ENCODE measurements at regions of chr5 and their contacts with region 1.

Region 1: GRCh38 chr5:157130925-157131324 is 11.7 kb downstream of the MED7 start:
- DNase-seq: peak in 1 of 2 experiments; percentile 59
- H3K4me3 ChIP-seq: no peak overlapping the region
- H3K4me3 Mint-ChIP-seq: no peak overlapping the region
- H3K27ac Mint-ChIP-seq: no peak overlapping the region
- H3K4me1 ChIP-seq: peaks cover 17% of the 10 kb centered on the region; the same call in 1 of the 2 replicates
- H3K4me1 Mint-ChIP-seq: peaks cover 14% of the 10 kb centered on the region
- H3K27me3 ChIP-seq: no peaks in the 10 kb centered on the region
- H3K27me3 Mint-ChIP-seq: no peaks in the 10 kb centered on the region
- CTCF ChIP-seq: no peak

Region 2: DNA sequence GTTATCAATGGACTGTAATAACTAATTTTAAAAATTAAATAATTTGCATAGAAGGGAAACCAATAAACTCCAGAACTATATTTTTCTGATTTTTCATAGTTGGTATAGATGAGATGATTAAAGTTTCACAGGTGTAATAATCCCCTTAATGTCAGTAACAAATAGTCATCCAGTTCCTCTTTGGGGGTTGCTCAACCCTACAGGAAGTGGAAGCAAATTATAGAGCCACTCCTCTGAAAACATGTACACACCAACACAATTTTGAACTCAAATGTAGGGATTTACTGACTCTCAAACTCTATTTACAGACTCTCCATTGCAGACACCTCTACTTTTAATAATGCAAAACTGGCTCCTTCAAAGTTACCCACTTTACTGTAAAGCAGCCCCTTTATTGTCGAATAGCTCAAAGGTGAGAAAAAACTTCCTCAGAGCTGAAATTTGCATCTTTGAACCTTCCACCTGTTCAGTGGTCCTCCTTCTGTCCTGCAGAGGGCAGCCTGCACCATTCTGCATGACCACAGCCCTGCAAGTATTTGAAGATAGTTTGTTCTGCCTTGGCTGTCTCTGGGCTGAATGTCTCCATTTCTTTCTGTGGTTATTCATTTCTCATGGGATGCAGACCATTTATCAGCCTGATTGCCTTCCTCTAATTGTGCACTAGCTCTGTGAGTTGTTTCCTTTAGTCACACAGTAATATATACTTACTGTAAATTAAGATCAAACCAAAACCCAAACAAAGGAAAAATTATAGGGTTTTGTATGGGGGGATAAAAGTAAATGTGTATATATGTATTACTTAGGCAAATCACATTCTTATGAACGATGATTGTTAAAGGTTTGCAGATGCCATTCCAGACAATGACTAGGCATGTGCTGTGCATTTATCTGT is 1187.2 kb before region 1 on chr5:
- CTCF ChIA-PET with region 1: no interaction called
- POLR2A ChIA-PET with region 1: no interaction called
- intact Hi-C with region 1: loop called (anchors 2 kb)
- DNase-seq: peak; percentile 73 to 77
- H3K4me3 ChIP-seq: no peak overlapping the region
- H3K4me3 Mint-ChIP-seq: peak overlapping the region; percentile 38
- H3K27ac Mint-ChIP-seq: peak overlapping the region; percentile 63
- H3K4me1 ChIP-seq: peaks cover 50% of the 10 kb centered on the region; the same call in 1 of the 2 replicates
- H3K4me1 Mint-ChIP-seq: peaks cover 31% of the 10 kb centered on the region
- H3K27me3 ChIP-seq: no peaks in the 10 kb centered on the region
- H3K27me3 Mint-ChIP-seq: no peaks in the 10 kb centered on the region
- CTCF ChIP-seq: peak; percentile 86 to 93

Region 3: DNA sequence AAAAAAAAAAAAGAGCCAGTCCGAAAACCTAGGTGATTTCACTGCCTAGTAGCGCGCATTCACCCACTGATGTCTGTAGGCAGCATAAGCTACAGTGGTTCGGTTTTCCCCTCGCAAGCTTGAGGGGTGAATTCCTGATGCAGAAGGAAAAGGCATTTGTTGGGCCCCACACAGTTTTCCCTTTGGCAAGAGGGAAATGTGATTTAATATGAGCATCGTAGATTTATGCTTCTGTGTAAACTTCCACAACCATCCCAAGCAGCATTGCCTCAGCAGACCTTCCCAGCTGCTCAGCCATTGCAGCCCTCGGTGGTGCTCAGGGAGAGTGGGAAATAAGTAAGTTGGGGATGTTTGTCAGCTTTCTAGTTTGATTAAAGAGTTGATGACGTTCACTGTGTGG is 512.3 kb before region 1 on chr5:
- CTCF ChIA-PET with region 1: no interaction called
- POLR2A ChIA-PET with region 1: no interaction called
- intact Hi-C with region 1: no loop called
- DNase-seq: no peak
- H3K4me3 ChIP-seq: no peak overlapping the region
- H3K4me3 Mint-ChIP-seq: no peak overlapping the region
- H3K27ac Mint-ChIP-seq: no peak overlapping the region
- H3K4me1 ChIP-seq: no peaks in the 10 kb centered on the region
- H3K4me1 Mint-ChIP-seq: no peaks in the 10 kb centered on the region
- H3K27me3 ChIP-seq: no peaks in the 10 kb centered on the region
- H3K27me3 Mint-ChIP-seq: peaks cover 3% of the 10 kb centered on the region
- CTCF ChIP-seq: no peak

Region 4: GRCh38 chr5:156824800-156825199 is 306.1 kb before region 1 on chr5:
- CTCF ChIA-PET with region 1: interaction called, 4 read pairs
- POLR2A ChIA-PET with region 1: no interaction called
- intact Hi-C with region 1: loop called (anchors 2 kb)
- DNase-seq: peak in 1 of 2 experiments; percentile 49
- H3K4me3 ChIP-seq: no peak overlapping the region
- H3K4me3 Mint-ChIP-seq: no peak overlapping the region
- H3K27ac Mint-ChIP-seq: no peak overlapping the region
- H3K4me1 ChIP-seq: 0 out of 2 replicates have a peak, but pooled peaks cover 9% of the 10 kb centered on the region
- H3K4me1 Mint-ChIP-seq: peaks cover 13% of the 10 kb centered on the region
- H3K27me3 ChIP-seq: no peaks in the 10 kb centered on the region
- H3K27me3 Mint-ChIP-seq: no peaks in the 10 kb centered on the region
- CTCF ChIP-seq: peak; percentile 44 to 55

Region 5: GRCh38 chr5:156892223-156892622 is 238.7 kb before region 1 on chr5:
- CTCF ChIA-PET with region 1: interaction called, 3 read pairs
- POLR2A ChIA-PET with region 1: no interaction called
- intact Hi-C with region 1: loop called (anchors 1 kb)
- DNase-seq: peak in 1 of 2 experiments; percentile 7
- H3K4me3 ChIP-seq: no peak overlapping the region
- H3K4me3 Mint-ChIP-seq: no peak overlapping the region
- H3K27ac Mint-ChIP-seq: no peak overlapping the region
- H3K4me1 ChIP-seq: no peaks in the 10 kb centered on the region
- H3K4me1 Mint-ChIP-seq: peaks cover 11% of the 10 kb centered on the region
- H3K27me3 ChIP-seq: no peaks in the 10 kb centered on the region
- H3K27me3 Mint-ChIP-seq: peaks cover 5% of the 10 kb centered on the region
- CTCF ChIP-seq: no peak

Region 6: DNA sequence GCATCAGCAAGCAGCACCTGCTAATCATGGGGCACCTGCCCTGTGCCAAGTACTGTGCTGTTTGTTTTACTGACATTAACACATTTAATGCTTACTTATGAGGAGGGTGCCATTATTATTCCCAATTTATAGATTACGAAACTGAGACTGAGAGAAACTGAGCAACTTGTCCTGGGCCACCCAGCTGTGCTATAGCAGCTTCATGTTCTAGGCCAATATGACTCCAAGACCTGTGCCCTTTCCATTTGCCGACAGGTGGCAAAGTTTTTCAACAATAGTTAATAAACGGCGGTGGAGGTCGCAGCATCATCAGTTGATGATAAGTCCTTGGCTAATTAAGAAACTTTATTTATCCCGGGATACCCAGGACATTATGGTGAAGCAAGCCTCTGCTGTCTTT is 223.3 kb before region 1 on chr5:
- CTCF ChIA-PET with region 1: no interaction called
- POLR2A ChIA-PET with region 1: no interaction called
- intact Hi-C with region 1: no loop called
- DNase-seq: no peak
- H3K4me3 ChIP-seq: no peak overlapping the region
- H3K4me3 Mint-ChIP-seq: no peak overlapping the region
- H3K27ac Mint-ChIP-seq: no peak overlapping the region
- H3K4me1 ChIP-seq: no peaks in the 10 kb centered on the region
- H3K4me1 Mint-ChIP-seq: no peaks in the 10 kb centered on the region
- H3K27me3 ChIP-seq: no peaks in the 10 kb centered on the region
- H3K27me3 Mint-ChIP-seq: no peaks in the 10 kb centered on the region
- CTCF ChIP-seq: no peak

Region 7: DNA sequence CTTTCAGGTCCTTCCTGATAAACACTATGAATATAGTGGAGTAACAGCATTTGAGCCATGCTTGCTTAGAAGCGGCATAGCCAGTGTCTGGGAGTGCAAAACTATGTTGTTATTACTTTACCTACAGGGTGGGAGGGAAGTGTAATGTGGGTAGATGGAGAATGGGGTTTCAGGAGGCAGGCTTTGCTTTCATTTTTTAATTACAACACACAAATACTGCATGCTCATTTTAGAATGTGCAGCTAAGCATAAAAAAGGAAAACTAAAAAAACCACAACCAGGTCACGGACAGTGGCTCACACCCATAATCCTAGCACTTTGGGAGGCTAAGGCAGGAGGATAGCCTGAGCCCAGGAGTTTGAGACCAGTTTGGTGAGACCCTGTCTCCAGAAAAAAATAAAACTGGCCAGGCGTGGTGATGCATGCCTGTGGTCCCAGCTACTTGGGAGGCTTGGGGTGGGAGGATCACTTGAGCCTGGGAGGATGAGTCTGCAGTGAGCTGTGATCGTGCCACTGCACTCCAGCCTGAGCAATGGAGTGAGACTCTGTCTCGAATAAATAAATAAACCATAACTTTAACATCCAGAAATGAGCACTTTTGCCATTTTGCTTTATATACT is 92.2 kb before region 1 on chr5:
- CTCF ChIA-PET with region 1: interaction called, 4 read pairs
- POLR2A ChIA-PET with region 1: no interaction called
- intact Hi-C with region 1: loop called (anchors 2 kb)
- DNase-seq: no peak
- H3K4me3 ChIP-seq: no peak overlapping the region
- H3K4me3 Mint-ChIP-seq: no peak overlapping the region
- H3K27ac Mint-ChIP-seq: peak overlapping the region; percentile 88
- H3K4me1 ChIP-seq: peaks cover 39% of the 10 kb centered on the region
- H3K4me1 Mint-ChIP-seq: peaks cover 24% of the 10 kb centered on the region
- H3K27me3 ChIP-seq: no peaks in the 10 kb centered on the region
- H3K27me3 Mint-ChIP-seq: no peaks in the 10 kb centered on the region
- CTCF ChIP-seq: no peak

Region 8: GRCh38 chr5:157059093-157059539 is 71.8 kb before region 1 on chr5 and contains the start of gene HAVCR1:
- CTCF ChIA-PET with region 1: interaction called, 3 read pairs
- POLR2A ChIA-PET with region 1: no interaction called
- intact Hi-C with region 1: loop called (anchors 2 kb)
- DNase-seq: peak; percentile 65 to 70
- H3K4me3 ChIP-seq: peak within 1 kb of the TSS; percentile 39
- H3K4me3 Mint-ChIP-seq: peak within 1 kb of the TSS; percentile 83
- H3K27ac Mint-ChIP-seq: peak within 1 kb of the TSS; percentile 94
- H3K4me1 ChIP-seq: peaks cover 44% of the 10 kb centered on the region
- H3K4me1 Mint-ChIP-seq: peaks cover 40% of the 10 kb centered on the region
- H3K27me3 ChIP-seq: no peaks in the 10 kb centered on the region
- H3K27me3 Mint-ChIP-seq: no peaks in the 10 kb centered on the region
- CTCF ChIP-seq: no peak
- total RNA-seq, gene HAVCR1: 135 and 144 TPM in 2 replicates

Measured in Caco-2 (cell line).